ENCODE measurements at regions of chr15 and their contacts with region 1.

Region 1: DNA sequence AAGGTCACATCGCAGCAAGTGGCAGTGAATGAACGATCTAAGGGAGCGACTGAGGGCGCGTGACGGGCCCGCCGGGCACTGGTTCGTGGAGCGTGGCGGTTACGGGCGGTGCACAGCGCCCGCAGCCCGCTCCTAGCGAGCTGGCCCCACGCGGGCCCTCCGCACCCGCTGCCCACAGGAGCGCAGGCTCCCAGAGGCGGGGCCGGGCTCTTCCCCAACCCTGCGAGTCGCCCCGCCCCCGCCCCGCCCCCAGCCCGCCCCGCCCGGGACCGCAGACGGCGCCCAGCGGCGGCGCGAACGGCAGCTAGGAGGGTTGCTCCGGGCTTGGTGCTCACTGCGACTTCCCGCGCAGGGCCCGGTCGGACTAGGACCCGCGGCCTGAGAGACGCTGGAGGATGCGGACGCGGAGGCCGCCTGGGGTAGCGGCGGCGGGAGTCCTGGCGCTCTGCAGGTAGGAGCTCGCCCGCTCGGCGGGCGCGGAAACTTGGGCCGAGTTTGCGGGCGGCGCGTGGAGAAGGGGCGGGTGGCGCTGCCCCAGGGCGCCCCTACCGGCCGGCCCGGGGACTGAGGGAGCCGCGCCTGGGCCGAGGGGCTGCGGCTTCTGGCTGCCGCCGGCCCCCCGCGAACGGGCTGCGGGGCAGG is at the start of gene C15orf39:
- DNase-seq: peak; percentile 90
- ATAC-seq: peak; percentile 82
- H3K4me3 ChIP-seq: peak within 1 kb of the TSS; percentile 100
- H3K27ac ChIP-seq: peak within 1 kb of the TSS; percentile 96
- H3K4me1 ChIP-seq: peaks cover 32% of the 10 kb centered on the region
- H3K27me3 ChIP-seq: no peaks in the 10 kb centered on the region
- CTCF ChIP-seq: peak; percentile 93
- total RNA-seq, gene C15orf39: 33.3 TPM

Region 2: DNA sequence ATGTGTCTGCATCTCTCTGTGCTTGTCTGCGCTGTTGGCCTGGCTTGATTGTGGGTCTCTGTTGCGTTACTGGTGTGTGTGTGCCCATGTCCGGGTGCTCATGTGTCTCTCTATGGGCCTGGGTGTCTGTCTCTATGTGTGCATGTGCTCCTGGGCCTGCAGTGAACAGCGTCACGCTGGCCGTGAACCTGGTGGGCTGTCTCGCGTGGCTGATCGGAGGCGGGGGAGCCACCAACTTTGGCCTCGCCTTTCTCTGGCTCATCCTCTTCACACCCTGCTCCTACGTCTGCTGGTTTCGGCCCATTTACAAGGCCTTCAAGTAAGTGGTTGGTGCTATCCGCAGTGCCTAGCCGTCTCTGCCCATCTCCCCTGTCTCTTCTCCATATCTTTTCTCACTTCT is 185.3 kb before region 1 on chr15:
- intact Hi-C with region 1: no loop called
- DNase-seq: no peak
- ATAC-seq: no peak
- H3K4me3 ChIP-seq: no peak overlapping the region
- H3K27ac ChIP-seq: no peak overlapping the region
- H3K4me1 ChIP-seq: no peaks in the 10 kb centered on the region
- H3K27me3 ChIP-seq: no peaks in the 10 kb centered on the region
- CTCF ChIP-seq: no peak

Region 3: DNA sequence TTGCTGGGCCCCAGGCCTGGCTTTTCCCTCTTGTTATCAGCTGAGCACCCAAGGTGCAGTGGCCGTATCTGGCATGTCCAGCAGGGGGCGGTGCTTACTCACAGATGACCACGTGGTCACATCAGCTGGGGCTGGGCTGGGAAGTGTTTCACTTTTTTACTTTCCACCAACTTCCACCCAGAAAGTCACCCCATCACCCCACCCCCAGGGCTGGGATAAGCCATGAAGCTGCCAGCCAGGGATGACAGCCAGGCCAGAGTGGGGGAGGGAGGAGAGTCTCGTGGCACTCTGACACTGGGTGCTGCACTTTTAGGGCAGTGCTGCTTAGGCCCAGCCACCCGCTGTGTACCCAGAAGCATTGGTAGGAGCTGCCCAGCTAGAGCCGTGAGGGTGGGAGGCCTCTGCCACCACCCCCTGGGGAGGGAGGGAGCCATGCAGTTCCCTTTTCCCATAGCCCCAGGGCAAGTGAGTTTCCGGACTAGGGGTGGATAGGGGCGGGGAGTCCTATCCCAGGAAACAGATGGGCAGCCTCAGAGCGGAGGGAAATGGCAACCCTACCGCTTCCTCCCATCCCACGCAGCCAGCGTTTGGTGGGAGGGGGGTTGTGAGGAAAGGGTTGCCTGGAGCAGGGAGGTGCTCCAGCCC is 172.2 kb before region 1 on chr15:
- intact Hi-C with region 1: loop called (anchors 5 kb)
- DNase-seq: peak; percentile 94
- ATAC-seq: peak; percentile 91
- H3K4me3 ChIP-seq: peak overlapping the region; percentile 20
- H3K27ac ChIP-seq: peak overlapping the region; percentile 75
- H3K4me1 ChIP-seq: peaks cover 44% of the 10 kb centered on the region
- H3K27me3 ChIP-seq: no peaks in the 10 kb centered on the region
- CTCF ChIP-seq: peak; percentile 96

Region 4: DNA sequence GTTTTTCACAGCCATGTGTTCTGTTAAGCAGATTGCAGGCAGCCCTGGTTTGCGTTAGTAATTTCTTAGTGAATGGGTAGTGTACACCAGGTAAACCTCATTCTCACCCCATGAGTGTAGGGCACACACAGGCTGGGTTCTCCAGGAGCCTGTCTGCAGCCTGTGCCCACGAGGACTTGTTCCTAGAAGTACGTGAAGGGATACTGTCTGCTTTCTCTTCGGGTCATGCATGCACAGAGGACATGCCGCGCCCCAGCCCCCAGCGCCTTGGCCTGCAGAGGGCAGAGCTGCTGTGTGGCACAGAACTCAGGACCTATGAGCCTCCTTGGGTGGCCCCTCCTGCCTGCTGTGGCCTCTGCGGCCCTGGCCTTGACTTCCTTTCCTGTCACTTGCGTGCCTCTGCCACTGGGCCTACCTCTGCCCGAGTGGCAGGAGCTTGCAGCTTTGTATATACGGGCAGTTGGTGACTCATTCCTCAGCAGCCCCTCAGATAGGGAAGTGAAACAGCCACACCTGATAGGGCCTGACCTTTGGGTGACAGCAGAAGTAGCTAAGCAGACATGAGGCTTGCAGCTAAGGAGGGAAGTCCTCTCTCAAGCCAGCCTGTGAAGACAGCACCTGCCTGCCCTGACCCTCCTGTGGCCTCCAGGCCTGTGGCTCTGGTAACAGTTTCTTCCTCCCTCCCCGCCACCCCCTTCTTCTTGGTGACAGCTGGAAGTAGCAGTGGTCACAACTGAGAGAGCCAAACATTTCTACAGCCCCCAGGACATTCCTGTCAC is 158.8 kb before region 1 on chr15:
- intact Hi-C with region 1: loop called (anchors 5 kb)
- DNase-seq: peak; percentile 94
- ATAC-seq: peak; percentile 83
- H3K4me3 ChIP-seq: no peak overlapping the region
- H3K27ac ChIP-seq: peak overlapping the region; percentile 88
- H3K4me1 ChIP-seq: peaks cover 56% of the 10 kb centered on the region
- H3K27me3 ChIP-seq: no peaks in the 10 kb centered on the region
- CTCF ChIP-seq: peak; percentile 69

Region 5: DNA sequence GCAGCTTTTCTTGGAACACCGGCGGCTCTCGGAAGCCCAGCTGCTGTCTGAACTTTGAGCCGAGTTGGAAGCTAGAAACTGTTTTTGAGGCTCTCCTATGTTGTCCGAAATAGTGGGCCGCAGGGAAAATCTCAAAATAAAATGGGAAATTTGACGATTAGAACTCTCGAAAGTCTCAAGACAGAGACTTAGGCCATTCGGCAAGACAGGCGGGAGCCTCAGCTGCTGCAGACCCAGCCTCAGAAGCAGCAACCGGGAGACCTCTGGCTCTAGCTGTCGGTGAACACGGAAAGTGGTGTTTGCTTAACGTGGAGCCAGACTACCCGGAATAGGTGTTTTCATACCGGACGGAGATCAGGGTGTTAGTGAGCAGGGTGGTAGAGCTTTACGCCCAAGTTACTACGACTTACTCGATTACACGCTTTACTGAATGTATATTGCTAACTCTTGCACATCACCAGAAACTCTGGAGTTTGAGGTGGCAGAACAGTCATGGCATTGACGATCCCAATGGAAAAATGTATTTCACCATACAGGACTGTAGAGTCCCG is 167.0 kb after region 1 on chr15:
- intact Hi-C with region 1: no loop called
- DNase-seq: no peak
- ATAC-seq: no peak
- H3K4me3 ChIP-seq: peak overlapping the region; percentile 98
- H3K27ac ChIP-seq: peak overlapping the region; percentile 99
- H3K4me1 ChIP-seq: peaks cover 18% of the 10 kb centered on the region
- H3K27me3 ChIP-seq: no peaks in the 10 kb centered on the region
- CTCF ChIP-seq: no peak

Measured in upper lobe of right lung (tissue), 1 donor.